Activated CD8-positive, alpha-beta T cell treated with anti-CD3 and anti-CD28 coated beads for 36 hours (primary cell): ENCODE measurements at regions of chr10 and their contacts with region 1.

Region 1: GRCh38 chr10:32367793-32368453 is 21.0 kb upstream of the EPC1 start:
- DNase-seq: peak; percentile 78
- ATAC-seq: peak; percentile 54
- H3K4me3 Mint-ChIP-seq: peak overlapping the region; percentile 42
- H3K27ac Mint-ChIP-seq: peak overlapping the region; percentile 52
- H3K4me1 Mint-ChIP-seq: peaks cover 46% of the 10 kb centered on the region
- H3K27me3 Mint-ChIP-seq: no peaks in the 10 kb centered on the region
- CTCF ChIP-seq: peak; percentile 94

Region 2: DNA sequence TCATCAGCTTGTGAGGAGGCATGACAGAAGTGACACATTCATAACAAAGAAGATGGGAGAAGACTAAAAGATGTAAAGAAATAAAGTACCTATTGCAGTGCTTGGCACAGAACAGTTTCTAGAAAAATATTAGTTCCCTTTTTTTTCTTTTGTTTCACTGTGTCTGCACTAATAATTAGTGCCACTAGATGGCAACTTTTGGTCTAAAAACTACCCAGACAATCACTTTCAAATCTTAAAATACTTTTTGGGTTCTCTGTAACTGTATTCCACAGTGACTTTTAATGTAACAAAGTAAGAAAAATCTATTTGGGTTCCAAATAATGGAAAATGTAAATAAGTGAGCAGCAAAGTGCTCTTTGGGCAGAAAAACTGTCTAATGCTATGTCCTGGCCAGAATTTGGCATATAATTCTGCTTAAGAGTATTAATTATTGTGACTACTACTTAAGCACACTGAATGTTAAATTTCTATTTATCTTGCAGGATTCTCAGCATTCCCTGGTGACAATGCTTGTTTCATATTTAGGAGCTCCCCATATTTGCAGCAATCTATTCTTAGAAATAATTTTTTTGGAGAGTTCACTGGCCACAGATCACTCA is 176.9 kb before region 1 on chr10:
- CTCF ChIA-PET with region 1: interaction called, 8 read pairs
- POLR2A ChIA-PET with region 1: no interaction called
- intact Hi-C with region 1: loop called (anchors 5 kb)
- DNase-seq: no peak
- ATAC-seq: peak; percentile 47
- H3K4me3 Mint-ChIP-seq: no peak overlapping the region
- H3K27ac Mint-ChIP-seq: no peak overlapping the region
- H3K4me1 Mint-ChIP-seq: no peaks in the 10 kb centered on the region
- H3K27me3 Mint-ChIP-seq: no peaks in the 10 kb centered on the region
- CTCF ChIP-seq: peak; percentile 77

Region 3: DNA sequence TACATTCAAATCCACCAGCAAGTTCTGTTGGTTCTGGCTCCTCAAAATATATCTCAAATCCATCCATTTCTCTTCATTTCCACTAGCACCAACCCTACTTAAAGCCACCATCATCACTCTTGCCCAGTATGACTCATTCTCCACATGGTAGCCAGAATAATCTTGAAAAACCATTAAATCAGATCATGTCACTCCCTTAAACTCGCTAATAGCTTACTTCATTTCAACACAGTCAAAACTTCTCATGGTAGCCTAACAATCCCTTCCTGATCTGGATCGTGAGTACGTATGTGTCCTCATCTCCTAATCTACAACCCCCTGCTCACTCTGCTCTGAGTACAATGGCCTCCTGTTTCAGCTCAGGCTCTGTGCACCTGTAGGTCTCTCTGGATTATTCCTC is 29.7 kb before region 1 on chr10:
- CTCF ChIA-PET with region 1: interaction called, 11 read pairs
- POLR2A ChIA-PET with region 1: interaction called, 8 read pairs
- intact Hi-C with region 1: no loop called
- DNase-seq: no peak
- ATAC-seq: no peak
- H3K4me3 Mint-ChIP-seq: no peak overlapping the region
- H3K27ac Mint-ChIP-seq: peak overlapping the region; percentile 62
- H3K4me1 Mint-ChIP-seq: peaks cover 89% of the 10 kb centered on the region
- H3K27me3 Mint-ChIP-seq: no peaks in the 10 kb centered on the region
- CTCF ChIP-seq: no peak

Region 4: GRCh38 chr10:32378363-32379317 is 10.7 kb after region 1 on chr10:
- CTCF ChIA-PET with region 1: interaction called, 25 read pairs
- POLR2A ChIA-PET with region 1: interaction called, 5 read pairs
- intact Hi-C with region 1: no loop called
- DNase-seq: peak; percentile 98
- ATAC-seq: peak; percentile 95
- H3K4me3 Mint-ChIP-seq: no peak overlapping the region
- H3K27ac Mint-ChIP-seq: no peak overlapping the region
- H3K4me1 Mint-ChIP-seq: peaks cover 21% of the 10 kb centered on the region
- H3K27me3 Mint-ChIP-seq: no peaks in the 10 kb centered on the region
- CTCF ChIP-seq: no peak